Esophagus muscularis mucosa (tissue), 4 donors: ENCODE measurements at regions of chr5 and their contacts with region 1.

Region 1: DNA sequence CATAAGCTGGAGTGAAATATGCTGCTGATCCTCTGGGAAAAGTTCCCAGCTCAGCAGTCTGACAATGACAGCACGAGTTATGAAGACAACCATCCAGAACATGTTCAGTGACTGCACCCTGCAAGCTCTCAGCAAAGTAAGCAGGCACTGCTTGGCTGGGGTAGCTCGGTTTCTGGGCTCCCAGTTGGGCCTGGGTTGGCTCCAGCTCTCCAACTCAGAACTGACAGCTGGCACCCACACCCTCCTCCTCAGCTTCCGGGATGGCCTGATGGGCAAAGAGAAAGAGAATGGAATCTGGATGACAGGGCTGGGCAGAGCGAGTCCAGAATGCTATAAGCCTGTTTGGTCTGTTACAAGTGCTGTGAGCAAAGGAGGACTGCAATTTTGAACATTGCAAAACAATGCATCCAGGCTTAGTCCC is 185.0 kb downstream of the CSNK1G3 start:
- DNase-seq: peak; percentile 92
- H3K4me3 ChIP-seq: no peak overlapping the region
- H3K27ac ChIP-seq: peak overlapping the region; percentile 61 to 83 (median 76)
- H3K4me1 ChIP-seq: peaks cover 22 to 46% (median 40%) of the 10 kb centered on the region in 4 donors
- H3K27me3 ChIP-seq: no peaks in the 10 kb centered on the region
- CTCF ChIP-seq: no peak
- EP300 ChIP-seq: no peak
- POLR2A ChIP-seq: no peak

Region 2: GRCh38 chr5:123875561-123876283 is 178.8 kb after region 1 on chr5:
- intact Hi-C with region 1: loop called (anchors 10 kb)
- DNase-seq: no peak
- H3K4me3 ChIP-seq: no peak overlapping the region
- H3K27ac ChIP-seq: peak overlapping the region in 1 of 4 donors; percentile 23
- H3K4me1 ChIP-seq: peaks cover 22 to 32% (median 29%) of the 10 kb centered on the region in 4 donors
- H3K27me3 ChIP-seq: no peaks in the 10 kb centered on the region
- CTCF ChIP-seq: no peak
- EP300 ChIP-seq: no peak
- POLR2A ChIP-seq: no peak

Region 3: GRCh38 chr5:123916331-123917121 is 219.6 kb after region 1 on chr5:
- intact Hi-C with region 1: no loop called
- DNase-seq: no peak
- H3K4me3 ChIP-seq: peak overlapping the region in 1 of 4 donors; percentile 9
- H3K27ac ChIP-seq: peak overlapping the region; percentile 19 to 51 (median 33)
- H3K4me1 ChIP-seq: peaks cover 0 to 15% (median 13%) of the 10 kb centered on the region in 4 donors
- H3K27me3 ChIP-seq: no peaks in the 10 kb centered on the region
- CTCF ChIP-seq: no peak
- EP300 ChIP-seq: no peak
- POLR2A ChIP-seq: no peak